HepG2 (cell line): ENCODE measurements at regions of chr2 and their contacts with region 1.

Region 1: DNA sequence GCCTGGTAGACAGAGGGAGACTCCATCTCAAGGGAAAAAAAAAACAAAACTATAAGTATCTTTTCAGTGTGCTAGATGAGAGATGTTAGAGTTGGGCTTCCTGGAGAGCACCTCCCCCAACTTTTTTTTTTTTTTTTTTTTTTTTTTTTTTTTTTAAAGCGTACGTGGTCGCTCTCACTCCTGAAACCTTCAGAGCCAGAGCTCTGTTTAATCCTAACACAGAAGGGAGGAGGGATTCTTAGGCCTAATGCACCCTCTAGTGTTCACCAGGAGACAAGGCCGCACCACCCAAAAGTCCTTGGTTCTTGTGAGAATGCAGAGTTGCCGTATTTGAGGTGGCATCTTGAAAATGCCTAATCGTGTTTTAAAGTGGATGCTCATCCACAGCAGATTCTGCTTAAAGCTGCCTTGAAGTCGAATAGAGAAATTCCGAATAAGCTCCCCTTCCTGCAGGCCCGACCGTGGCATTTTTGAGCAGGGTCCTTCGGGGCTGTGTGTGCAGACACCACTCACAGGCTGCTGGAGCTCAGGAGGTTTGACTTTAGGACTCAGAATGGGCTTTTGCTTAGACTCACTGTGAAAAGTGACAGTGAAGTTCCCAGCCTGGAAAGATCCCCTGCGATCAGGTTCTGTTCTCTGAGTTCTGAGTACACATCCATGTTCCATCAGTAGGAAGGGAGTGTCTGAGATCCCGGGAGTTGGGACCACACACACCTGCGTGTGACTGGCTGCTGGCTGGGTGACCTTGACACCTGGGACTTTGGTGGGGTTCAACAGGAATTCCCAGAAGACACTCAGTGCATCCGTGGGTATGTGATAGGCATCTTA is 252.6 kb downstream of the AGAP1 start:
- DNase-seq: peak; percentile 81
- ATAC-seq: peak; percentile 95
- H3K4me3 ChIP-seq: no peak overlapping the region
- H3K27ac ChIP-seq: no peak overlapping the region
- H3K4me1 ChIP-seq: peaks cover 7% of the 10 kb centered on the region
- H3K27me3 ChIP-seq: no peaks in the 10 kb centered on the region
- CTCF ChIP-seq: peak; percentile 87
- EP300 ChIP-seq: no peak
- POLR2A ChIP-seq: no peak
- RAD21 ChIP-seq: peak; percentile 76

Region 2: GRCh38 chr2:235135990-235136561 is 610.4 kb before region 1 on chr2:
- CTCF ChIA-PET with region 1: interaction called, 10 read pairs
- POLR2A ChIA-PET with region 1: no interaction called
- in situ Hi-C with region 1: loop called (anchors 5 kb)
- intact Hi-C with region 1: no loop called
- DNase-seq: peak; percentile 78
- ATAC-seq: peak; percentile 95
- H3K4me3 ChIP-seq: no peak overlapping the region
- H3K27ac ChIP-seq: no peak overlapping the region
- H3K4me1 ChIP-seq: no peaks in the 10 kb centered on the region
- H3K27me3 ChIP-seq: peaks cover 0 to 40% of the 10 kb centered on the region in 2 experiments; a peak in 4 of 5 replicates
- CTCF ChIP-seq: peak; percentile 87
- EP300 ChIP-seq: no peak
- POLR2A ChIP-seq: no peak
- RAD21 ChIP-seq: peak; percentile 88

Region 3: DNA sequence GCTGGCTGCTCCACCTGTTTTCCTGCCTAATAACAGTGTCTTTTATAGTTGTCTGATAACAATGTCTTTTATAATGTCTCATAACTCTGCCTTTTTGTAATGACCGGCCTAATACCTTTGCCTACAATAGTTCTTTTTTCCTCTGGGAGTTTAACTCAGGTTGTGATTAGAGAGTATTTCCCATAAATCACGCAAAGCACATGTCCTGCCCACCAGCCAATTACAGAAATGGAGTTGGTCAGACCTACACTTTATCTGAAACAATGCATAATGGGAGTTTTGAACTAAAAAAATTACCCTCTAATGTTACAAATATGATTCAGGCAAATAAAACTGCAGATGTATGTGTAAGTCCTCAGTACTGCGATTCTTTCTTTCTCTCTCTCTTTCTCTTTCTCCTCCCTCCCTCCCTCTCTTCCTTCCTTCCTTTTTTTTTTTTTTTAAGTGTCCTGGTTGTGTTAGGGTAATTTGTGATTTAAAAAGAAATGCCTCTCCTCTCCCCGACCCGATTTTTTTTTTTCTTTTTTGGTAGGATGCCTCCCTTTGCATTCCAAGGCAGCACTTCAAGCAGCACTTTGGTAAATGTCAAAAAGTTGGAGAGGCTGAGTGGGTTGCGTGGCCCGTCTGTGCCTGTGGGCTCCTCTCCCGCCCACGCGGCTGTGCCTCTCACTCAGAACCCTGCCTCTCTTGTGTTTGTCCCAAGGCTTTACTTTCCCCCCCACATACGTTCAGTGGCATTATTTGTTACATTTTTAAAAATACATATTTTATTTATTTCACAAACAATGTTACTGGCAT is 105.3 kb before region 1 on chr2:
- CTCF ChIA-PET with region 1: no interaction called
- POLR2A ChIA-PET with region 1: no interaction called
- in situ Hi-C with region 1: no loop called
- intact Hi-C with region 1: loop called (anchors 2 kb)
- DNase-seq: no peak
- ATAC-seq: no peak
- H3K4me3 ChIP-seq: no peak overlapping the region
- H3K27ac ChIP-seq: no peak overlapping the region
- H3K4me1 ChIP-seq: peaks cover 13% of the 10 kb centered on the region
- H3K27me3 ChIP-seq: no peaks in the 10 kb centered on the region
- CTCF ChIP-seq: no peak
- EP300 ChIP-seq: no peak
- POLR2A ChIP-seq: no peak
- RAD21 ChIP-seq: no peak

Region 4: DNA sequence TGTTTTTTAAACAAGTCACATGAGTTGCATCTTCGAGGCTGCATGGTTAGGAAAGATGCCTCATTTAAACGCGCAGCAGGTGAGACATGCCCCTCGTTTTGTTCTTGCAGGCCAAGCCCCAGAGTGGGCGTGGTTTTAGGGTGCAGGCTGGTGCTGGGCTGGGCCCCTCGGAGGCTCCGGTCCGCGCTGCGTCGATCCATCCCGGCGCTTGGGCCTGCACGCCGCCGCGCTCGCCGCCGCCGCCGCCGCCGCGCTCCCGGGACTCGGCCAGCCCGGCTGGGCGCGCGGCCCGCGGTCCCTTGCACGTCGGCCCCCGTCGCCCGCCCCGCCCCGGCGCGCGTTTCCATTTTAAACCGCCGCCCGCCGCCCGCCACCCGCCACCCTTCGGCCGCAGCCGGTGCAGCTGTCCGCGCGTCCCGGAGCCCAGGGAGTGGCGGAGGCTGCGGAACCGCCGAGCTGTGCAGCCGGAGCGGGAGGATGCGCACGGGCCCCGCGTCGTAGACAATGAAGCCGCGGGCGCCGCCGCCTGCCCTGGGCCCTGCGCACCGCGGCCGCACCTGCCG is 77.1 kb before region 1 on chr2:
- CTCF ChIA-PET with region 1: no interaction called
- POLR2A ChIA-PET with region 1: no interaction called
- in situ Hi-C with region 1: no loop called
- intact Hi-C with region 1: loop called (anchors 10 kb)
- DNase-seq: peak; percentile 69
- ATAC-seq: peak; percentile 77
- H3K4me3 ChIP-seq: peak overlapping the region; percentile 63 to 82 (median 66); a peak in 5 of 6 replicates
- H3K27ac ChIP-seq: no peak overlapping the region
- H3K4me1 ChIP-seq: peaks cover 53% of the 10 kb centered on the region
- H3K27me3 ChIP-seq: no peaks in the 10 kb centered on the region
- CTCF ChIP-seq: no peak
- EP300 ChIP-seq: no peak
- POLR2A ChIP-seq: no peak
- RAD21 ChIP-seq: no peak